CD4-positive, alpha-beta T cell (primary cell): ENCODE measurements at regions of chr7 and their contacts with region 1.

Region 1: GRCh38 chr7:21427182-21427870 is 557 bp upstream of the SP4 start:
- DNase-seq: peak; percentile 98 to 100 (median 99)
- ATAC-seq: peak; percentile 74
- H3K4me3 ChIP-seq: peak overlapping the region; percentile 93
- H3K4me3 Mint-ChIP-seq: peak overlapping the region; percentile 100
- H3K27ac ChIP-seq: peak overlapping the region; percentile 97
- H3K27ac Mint-ChIP-seq: peak overlapping the region; percentile 99
- H3K4me1 ChIP-seq: peaks cover 29% of the 10 kb centered on the region
- H3K4me1 Mint-ChIP-seq: peaks cover 47% of the 10 kb centered on the region
- H3K27me3 ChIP-seq: no peaks in the 10 kb centered on the region
- H3K27me3 Mint-ChIP-seq: no peaks in the 10 kb centered on the region
- CTCF ChIP-seq: no peak

Region 2: DNA sequence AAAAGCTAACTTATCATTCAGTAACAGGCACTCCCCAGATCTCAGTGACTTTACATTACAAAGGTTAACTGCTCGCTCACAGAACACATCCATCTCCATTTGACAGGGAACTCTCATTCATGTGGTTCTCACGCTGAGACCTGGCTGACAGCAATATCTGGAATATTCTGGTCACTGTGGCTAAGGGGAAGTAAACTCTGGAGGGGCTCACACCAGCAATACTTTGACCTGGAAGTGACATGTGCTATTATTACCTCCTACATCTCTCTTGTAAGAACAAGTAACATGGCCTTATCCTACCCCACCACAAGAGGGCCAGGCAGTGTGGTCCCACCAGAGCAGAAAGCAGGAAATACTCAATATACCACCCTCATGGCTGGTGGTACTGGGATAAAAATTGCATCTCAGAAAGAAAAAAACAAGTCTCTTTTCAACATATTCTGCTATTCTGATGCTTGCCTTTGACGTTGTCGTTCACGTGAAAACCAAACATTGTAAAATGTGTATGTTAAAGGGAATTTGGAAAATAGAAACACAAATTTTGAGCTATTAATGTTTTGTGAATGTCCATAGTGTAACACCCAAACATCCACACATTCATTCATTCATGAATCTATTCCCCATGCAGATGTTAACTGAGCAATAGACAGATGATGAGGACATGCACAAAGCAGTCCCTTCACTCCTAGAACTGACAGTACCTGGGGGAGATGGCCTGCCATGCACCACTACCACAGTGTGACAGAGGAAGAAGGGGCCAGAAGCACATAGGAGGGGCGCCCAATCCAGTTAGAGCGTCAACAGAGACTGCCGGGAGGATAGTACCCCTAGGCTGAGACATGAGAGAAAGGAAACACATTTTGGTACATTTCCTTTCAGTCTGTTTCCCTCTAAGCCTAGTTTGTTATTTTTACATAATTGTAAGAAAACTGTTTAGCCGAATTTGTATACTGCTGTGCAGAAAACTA is 165.4 kb before region 1 on chr7:
- CTCF ChIA-PET with region 1: no interaction called
- POLR2A ChIA-PET with region 1: interaction called, 6 read pairs
- intact Hi-C with region 1: loop called (anchors 5 kb)
- DNase-seq: peak; percentile 1 to 65 (median 28)
- ATAC-seq: no peak
- H3K4me3 ChIP-seq: no peak overlapping the region
- H3K4me3 Mint-ChIP-seq: no peak overlapping the region
- H3K27ac ChIP-seq: no peak overlapping the region
- H3K27ac Mint-ChIP-seq: no peak overlapping the region
- H3K4me1 ChIP-seq: peaks cover 3% of the 10 kb centered on the region
- H3K4me1 Mint-ChIP-seq: peaks cover 9% of the 10 kb centered on the region
- H3K27me3 ChIP-seq: no peaks in the 10 kb centered on the region
- H3K27me3 Mint-ChIP-seq: peaks cover 5% of the 10 kb centered on the region
- CTCF ChIP-seq: peak; percentile 45

Region 3: GRCh38 chr7:21358648-21359047 is 68.7 kb before region 1 on chr7:
- CTCF ChIA-PET with region 1: interaction called, 3 read pairs
- POLR2A ChIA-PET with region 1: interaction called, 29 read pairs
- intact Hi-C with region 1: loop called (anchors 5 kb)
- DNase-seq: peak in 1 of 14 experiments; percentile 32
- ATAC-seq: no peak
- H3K4me3 ChIP-seq: no peak overlapping the region
- H3K4me3 Mint-ChIP-seq: no peak overlapping the region
- H3K27ac ChIP-seq: no peak overlapping the region
- H3K27ac Mint-ChIP-seq: no peak overlapping the region
- H3K4me1 ChIP-seq: peaks cover 49% of the 10 kb centered on the region
- H3K4me1 Mint-ChIP-seq: peaks cover 73% of the 10 kb centered on the region
- H3K27me3 ChIP-seq: no peaks in the 10 kb centered on the region
- H3K27me3 Mint-ChIP-seq: no peaks in the 10 kb centered on the region
- CTCF ChIP-seq: no peak

Region 4: GRCh38 chr7:21945454-21946227 is 518.3 kb after region 1 on chr7 and contains the start of gene CDCA7L:
- CTCF ChIA-PET with region 1: no interaction called
- POLR2A ChIA-PET with region 1: interaction called, 18 read pairs
- intact Hi-C with region 1: loop called in 1 of 2 experiments (anchors 5 kb)
- DNase-seq: peak; percentile 6 to 68 (median 38)
- ATAC-seq: peak; percentile 79
- H3K4me3 ChIP-seq: peak within 1 kb of the TSS; percentile 66
- H3K4me3 Mint-ChIP-seq: peak within 1 kb of the TSS; percentile 94
- H3K27ac ChIP-seq: no peak within 1 kb of the TSS
- H3K27ac Mint-ChIP-seq: peak within 1 kb of the TSS; percentile 71
- H3K4me1 ChIP-seq: peaks cover 24% of the 10 kb centered on the region
- H3K4me1 Mint-ChIP-seq: peaks cover 67% of the 10 kb centered on the region
- H3K27me3 ChIP-seq: no peaks in the 10 kb centered on the region
- H3K27me3 Mint-ChIP-seq: no peaks in the 10 kb centered on the region
- CTCF ChIP-seq: no peak
- total RNA-seq, gene CDCA7L: 23.1 to 23.7 TPM

Region 5: DNA sequence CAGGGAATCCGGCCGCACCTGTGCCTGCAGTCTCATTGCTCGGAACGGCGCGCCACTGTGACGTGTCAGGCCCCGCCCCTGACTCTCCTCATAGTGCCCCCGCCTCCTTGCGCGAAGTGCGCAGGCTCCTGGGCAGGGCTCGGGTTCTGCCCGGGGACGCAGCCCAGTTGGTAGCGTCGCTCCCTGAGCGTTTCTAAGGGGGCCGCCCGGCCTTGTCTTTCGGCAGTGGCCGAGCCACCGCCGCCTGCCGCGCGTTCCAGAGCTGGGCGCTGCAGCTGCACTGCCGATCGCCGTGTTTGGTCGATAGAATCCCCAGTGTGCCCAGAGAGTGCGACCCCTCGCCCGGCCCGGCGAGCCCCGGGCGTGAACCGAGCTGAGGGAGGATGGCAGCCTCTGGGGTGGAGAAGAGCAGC is 1678.3 kb after region 1 on chr7 and contains the start of gene KLHL7:
- CTCF ChIA-PET with region 1: no interaction called
- POLR2A ChIA-PET with region 1: interaction called, 4 read pairs
- intact Hi-C with region 1: loop called in 1 of 2 experiments (anchors 10 kb)
- DNase-seq: peak; percentile 89 to 98 (median 96)
- ATAC-seq: peak; percentile 94
- H3K4me3 ChIP-seq: peak within 1 kb of the TSS; percentile 98
- H3K4me3 Mint-ChIP-seq: peak within 1 kb of the TSS; percentile 98
- H3K27ac ChIP-seq: peak within 1 kb of the TSS; percentile 94
- H3K27ac Mint-ChIP-seq: peak within 1 kb of the TSS; percentile 96
- H3K4me1 ChIP-seq: peaks cover 19% of the 10 kb centered on the region
- H3K4me1 Mint-ChIP-seq: peaks cover 52% of the 10 kb centered on the region
- H3K27me3 ChIP-seq: no peaks in the 10 kb centered on the region
- H3K27me3 Mint-ChIP-seq: no peaks in the 10 kb centered on the region
- CTCF ChIP-seq: no peak
- total RNA-seq, gene KLHL7: 14.3 to 19.6 TPM